Panc1 (cell line): ENCODE measurements at regions of chr13 and their contacts with region 1.

Region 1: DNA sequence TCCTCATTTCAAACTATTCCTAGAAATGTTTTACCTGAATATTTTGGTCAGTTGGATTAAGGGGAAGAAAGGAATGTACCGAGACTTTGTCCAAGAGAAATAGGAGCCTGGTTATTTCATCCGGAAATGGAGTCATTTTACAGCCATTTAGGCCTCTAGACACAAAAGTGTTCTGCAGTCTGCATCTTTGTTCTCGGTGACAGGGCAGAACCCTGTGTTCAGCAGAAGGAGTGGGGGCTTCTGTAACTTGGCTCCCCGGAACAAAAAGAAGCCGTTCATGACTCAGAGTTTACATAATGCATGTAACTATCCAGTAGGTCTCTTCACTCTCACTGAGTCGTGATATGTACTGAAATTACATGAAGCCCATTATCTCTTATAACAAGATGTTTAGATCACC is 21.6 kb upstream of the FNDC3A start:
- DNase-seq: no peak
- ATAC-seq: no peak
- H3K4me3 ChIP-seq: no peak overlapping the region
- H3K27ac ChIP-seq: no peak overlapping the region
- H3K4me1 ChIP-seq: no peaks in the 10 kb centered on the region
- H3K27me3 ChIP-seq: no peaks in the 10 kb centered on the region
- CTCF ChIP-seq: no peak

Region 2: GRCh38 chr13:48818495-48819031 is 135.5 kb before region 1 on chr13:
- CTCF ChIA-PET with region 1: no interaction called
- POLR2A ChIA-PET with region 1: no interaction called
- in situ Hi-C with region 1: no loop called
- intact Hi-C with region 1: loop called (anchors 5 kb)
- DNase-seq: peak; percentile 38
- ATAC-seq: peak; percentile 26; the same call in 1 of the 2 replicates
- H3K4me3 ChIP-seq: no peak overlapping the region
- H3K27ac ChIP-seq: no peak overlapping the region
- H3K4me1 ChIP-seq: no peaks in the 10 kb centered on the region
- H3K27me3 ChIP-seq: no peaks in the 10 kb centered on the region
- CTCF ChIP-seq: no peak